HEK293 (cell line): ENCODE measurements at regions of chr12 and their contacts with region 1.

Region 1: DNA sequence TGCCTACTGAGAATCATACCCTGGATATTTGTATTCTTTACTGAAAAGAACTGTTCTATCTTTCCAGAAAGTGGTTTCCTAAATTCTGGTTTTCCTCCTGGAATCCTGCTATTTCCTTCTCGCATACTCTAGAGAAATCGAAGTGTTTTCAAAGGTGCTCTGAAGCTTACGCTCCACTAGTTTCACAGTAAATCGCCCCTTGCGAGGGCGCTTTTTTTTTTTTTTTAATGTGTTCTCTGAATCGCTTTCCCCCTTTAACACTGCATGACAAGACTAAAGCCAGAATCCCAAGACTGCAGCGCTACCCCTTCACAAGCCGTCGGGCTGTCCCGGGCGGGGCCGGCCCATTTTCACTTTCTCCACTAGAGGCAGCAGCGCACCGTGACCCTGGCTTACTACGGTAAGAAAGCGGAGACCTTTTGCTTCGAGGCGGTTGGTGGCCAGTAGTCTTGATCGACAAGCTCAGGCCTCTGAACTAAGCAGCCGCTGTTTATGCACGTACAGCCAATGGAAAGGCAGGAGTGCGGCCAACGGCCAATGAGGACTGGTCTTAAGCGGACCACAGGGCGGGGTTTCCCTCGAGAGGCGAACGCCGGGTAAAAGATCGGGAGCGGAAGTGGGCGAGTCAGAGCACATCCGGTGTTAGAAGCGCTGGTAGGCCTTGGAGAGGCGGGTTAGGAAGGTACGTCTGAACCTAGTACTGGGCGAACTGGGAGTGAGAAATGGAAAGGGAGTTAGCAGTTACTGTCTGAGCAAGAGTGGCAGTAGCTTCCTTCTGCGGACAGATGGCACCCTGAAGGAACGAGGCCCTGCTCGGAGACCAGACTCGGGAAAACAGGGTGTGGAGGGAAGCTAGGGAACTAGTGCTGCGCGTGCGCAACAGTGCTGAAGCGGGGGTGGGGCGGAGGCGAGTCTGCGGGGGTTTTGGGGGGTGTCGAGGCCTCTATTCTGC is at the start of gene TMBIM6:
- H3K4me3 ChIP-seq: peak within 1 kb of the TSS; percentile 74
- H3K27ac ChIP-seq: peak within 1 kb of the TSS; percentile 92
- H3K4me1 ChIP-seq: peaks cover 11% of the 10 kb centered on the region
- CTCF ChIP-seq: peak; percentile 94

Region 2: DNA sequence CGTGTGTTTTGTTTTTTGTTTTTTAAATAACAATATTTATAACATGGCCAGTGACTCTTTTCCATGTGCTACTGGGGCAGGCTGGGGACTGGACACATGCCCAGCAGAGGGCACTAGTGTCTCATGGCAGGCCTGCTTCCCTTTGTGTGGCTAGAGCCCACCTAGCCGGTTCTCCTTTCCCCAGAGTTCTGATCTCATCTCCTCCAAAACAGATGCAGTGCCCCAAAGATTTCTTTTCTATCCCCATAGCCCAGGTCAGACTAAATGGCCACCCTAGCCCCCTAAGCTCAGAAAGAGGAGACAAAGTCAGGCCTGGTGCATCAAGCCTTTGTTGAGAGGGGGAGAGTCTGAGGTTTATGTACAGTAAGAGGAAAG is 96.6 kb before region 1 on chr12:
- CTCF ChIA-PET with region 1: interaction called, 6 read pairs
- POLR2A ChIA-PET with region 1: interaction called, 11 read pairs
- H3K4me3 ChIP-seq: no peak overlapping the region
- H3K27ac ChIP-seq: no peak overlapping the region
- H3K4me1 ChIP-seq: no peaks in the 10 kb centered on the region
- CTCF ChIP-seq: peak; percentile 84

Region 3: DNA sequence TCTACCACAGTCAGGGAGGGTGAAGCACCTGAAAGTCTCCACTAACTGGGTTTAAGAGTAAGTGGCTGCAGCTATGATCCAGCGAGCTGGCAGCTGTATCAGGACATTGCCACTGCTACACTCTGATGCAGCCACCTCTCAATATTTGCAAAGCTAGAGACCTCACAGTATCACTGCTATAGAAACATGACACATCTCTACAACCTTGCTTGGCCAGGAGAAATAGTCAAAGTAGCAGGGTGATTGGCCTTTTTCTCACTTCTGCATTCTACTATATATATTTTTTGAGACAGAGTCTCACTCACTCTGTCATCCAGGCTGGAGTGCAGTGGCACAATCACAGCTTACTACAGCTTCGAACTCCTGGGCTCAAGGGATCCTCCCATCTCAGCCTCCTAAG is 24.7 kb before region 1 on chr12:
- CTCF ChIA-PET with region 1: interaction called, 8 read pairs
- POLR2A ChIA-PET with region 1: interaction called, 15 read pairs
- H3K4me3 ChIP-seq: no peak overlapping the region
- H3K27ac ChIP-seq: no peak overlapping the region
- H3K4me1 ChIP-seq: no peaks in the 10 kb centered on the region
- CTCF ChIP-seq: no peak

Region 4: GRCh38 chr12:49763006-49763591 is 21.9 kb after region 1 on chr12:
- CTCF ChIA-PET with region 1: interaction called, 20 read pairs
- POLR2A ChIA-PET with region 1: interaction called, 14 read pairs
- H3K4me3 ChIP-seq: no peak overlapping the region
- H3K27ac ChIP-seq: no peak overlapping the region
- H3K4me1 ChIP-seq: no peaks in the 10 kb centered on the region
- CTCF ChIP-seq: 0 out of 2 replicates have a peak, but pooled peaks have one; percentile 25

Region 5: DNA sequence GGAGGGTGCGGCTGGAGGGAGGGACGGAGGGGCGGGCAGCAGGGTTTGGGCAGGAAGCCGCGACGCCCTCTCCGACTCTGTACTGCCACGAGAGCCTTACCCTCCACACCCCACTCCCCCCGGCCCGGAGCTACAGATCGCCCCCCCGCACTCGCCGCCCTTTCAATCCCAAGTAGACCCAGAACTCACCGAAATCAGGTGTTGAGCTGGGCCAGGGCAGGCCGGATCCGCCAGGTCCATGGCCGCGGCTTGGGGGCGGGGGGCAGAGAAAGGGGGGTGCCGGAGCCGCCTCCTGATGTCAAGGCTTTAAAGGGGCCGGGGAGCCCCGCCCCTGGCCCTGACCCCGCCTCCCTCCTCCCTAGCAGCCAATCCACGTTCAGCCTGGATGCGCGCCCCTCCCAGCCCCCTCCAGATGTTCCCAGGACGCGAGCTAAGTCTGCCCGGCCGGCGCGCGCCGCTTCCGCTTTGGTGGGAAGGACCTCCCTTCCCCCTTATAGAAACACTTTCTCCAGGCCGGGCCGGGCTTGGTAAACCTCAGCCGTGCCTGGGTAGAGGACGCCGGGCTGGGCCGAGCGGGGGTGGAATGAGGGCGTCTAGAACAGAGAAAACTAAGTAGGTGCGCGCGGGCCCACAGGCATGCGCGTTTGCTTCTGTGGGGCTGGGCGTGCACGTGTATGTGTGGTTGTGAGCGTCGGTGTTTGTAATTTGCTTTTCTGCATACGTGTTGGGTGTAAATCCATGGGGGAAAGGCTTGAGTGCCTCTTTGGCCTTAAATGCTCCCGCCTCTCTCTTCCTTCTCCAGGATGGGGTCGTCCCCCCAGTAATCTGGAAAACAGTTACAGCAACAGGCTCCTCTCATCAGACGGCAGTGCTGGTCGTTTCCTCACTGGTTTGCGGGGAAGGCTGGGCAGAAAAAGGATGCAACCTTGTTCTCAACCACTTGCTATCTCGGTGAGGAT is 87.2 kb after region 1 on chr12 and contains the start of gene NCKAP5L:
- CTCF ChIA-PET with region 1: interaction called, 3 read pairs
- POLR2A ChIA-PET with region 1: interaction called, 11 read pairs
- H3K4me3 ChIP-seq: peak within 1 kb of the TSS; percentile 77
- H3K27ac ChIP-seq: peak within 1 kb of the TSS; percentile 88
- H3K4me1 ChIP-seq: peaks cover 25% of the 10 kb centered on the region
- CTCF ChIP-seq: no peak

Region 6: GRCh38 chr12:49920241-49920921 is 179.2 kb after region 1 on chr12:
- CTCF ChIA-PET with region 1: no interaction called
- POLR2A ChIA-PET with region 1: no interaction called
- H3K4me3 ChIP-seq: no peak overlapping the region
- H3K27ac ChIP-seq: no peak overlapping the region
- H3K4me1 ChIP-seq: peaks cover 2% of the 10 kb centered on the region; the same call in 1 of the 2 replicates
- CTCF ChIP-seq: no peak